GM10248 (cell line): ENCODE measurements at regions of chr12 and their contacts with region 1.

Region 1: GRCh38 chr12:40723001-40723400 is 30.8 kb downstream of the CNTN1 start:
- DNase-seq: no peak
- CTCF ChIP-seq: no peak

Region 2: DNA sequence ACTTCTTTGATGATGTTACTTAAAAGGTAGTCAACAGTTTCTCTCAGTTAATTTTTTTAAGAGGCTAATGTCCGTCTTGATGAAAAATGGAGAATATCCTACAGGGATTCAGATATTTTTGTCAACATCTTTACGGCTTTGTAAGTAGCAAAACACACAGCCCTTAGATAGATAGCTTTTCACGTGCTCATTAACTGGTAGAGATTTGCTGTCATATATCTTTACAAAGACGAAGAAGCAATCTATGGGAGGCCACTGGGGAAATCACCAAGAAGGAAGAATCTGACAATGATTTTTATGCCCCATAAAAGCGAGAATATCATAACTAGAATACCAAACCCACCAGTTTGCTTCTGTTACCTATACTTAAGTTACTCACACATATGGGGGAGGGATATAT is 738.3 kb before region 1 on chr12:
- CTCF ChIA-PET with region 1: no interaction called
- POLR2A ChIA-PET with region 1: no interaction called
- DNase-seq: no peak
- CTCF ChIP-seq: no peak

Region 3: DNA sequence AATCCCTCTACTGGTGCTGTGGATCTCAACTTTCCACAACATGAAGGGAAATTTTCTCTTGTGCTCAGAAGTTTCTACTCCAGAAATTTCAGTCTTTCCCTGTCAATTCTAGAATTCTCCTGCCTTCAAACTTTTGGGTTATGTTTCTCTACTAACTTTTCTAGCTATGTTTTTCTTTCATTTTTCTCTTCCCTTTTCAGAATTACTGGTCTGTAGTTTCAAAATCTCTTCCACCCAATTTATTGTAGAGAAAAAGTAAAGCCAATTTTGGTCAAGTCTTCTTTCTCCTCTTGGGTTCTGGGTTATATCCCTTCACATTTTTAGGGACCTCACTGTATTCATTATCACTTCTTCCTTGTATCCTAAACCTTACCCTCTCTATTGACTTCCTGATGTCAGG is 11.9 kb before region 1 on chr12:
- CTCF ChIA-PET with region 1: interaction called, 13 read pairs
- POLR2A ChIA-PET with region 1: no interaction called
- DNase-seq: no peak
- CTCF ChIP-seq: no peak

Region 4: DNA sequence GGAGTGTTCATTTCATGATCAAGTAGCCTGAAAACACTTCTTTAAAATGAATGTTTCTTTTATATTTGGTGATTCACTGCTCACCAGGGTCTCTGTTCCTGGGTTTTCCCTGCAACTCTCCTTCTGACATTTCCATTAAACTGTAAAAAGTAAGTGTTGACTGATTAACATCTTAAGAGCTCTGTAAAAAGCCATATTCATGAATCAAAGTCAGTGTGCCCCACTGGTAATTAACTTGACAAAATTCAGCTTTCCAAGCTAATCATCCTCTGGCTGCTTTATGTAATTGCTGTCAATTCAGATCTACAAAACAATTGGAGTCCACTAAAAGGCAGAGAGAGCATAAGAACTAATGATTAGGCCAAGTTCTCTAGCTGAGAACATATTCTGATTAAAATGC is 10.9 kb after region 1 on chr12:
- CTCF ChIA-PET with region 1: no interaction called
- POLR2A ChIA-PET with region 1: no interaction called
- DNase-seq: no peak
- CTCF ChIP-seq: no peak

Region 5: DNA sequence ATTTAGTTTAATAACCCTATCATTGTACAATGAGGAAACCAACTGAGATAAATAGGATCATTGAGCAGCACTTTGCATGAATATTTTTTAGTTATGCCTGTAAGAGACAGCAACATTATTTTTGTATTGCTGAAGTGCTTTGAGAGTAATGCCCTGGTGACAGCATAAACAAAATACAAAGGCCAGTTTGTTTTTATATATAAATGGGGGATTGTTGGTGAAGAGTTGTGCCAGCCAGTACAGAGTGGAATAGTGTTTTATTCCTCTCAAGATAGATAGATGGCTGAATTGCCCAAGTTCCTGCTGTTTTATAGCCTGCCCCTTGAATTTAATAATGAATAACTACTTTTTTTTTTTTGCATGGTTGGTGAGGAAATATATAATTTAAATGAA is 71.1 kb after region 1 on chr12:
- CTCF ChIA-PET with region 1: no interaction called
- POLR2A ChIA-PET with region 1: no interaction called
- DNase-seq: no peak
- CTCF ChIP-seq: no peak